Head of caudate nucleus (tissue), 42 donors: ENCODE measurements at regions of chr14 and their contacts with region 1.

Region 1: GRCh38 chr14:101964297-101965144 is at the start of gene DYNC1H1:
- DNase-seq: peak; percentile 87 to 97 (median 94)

Region 2: DNA sequence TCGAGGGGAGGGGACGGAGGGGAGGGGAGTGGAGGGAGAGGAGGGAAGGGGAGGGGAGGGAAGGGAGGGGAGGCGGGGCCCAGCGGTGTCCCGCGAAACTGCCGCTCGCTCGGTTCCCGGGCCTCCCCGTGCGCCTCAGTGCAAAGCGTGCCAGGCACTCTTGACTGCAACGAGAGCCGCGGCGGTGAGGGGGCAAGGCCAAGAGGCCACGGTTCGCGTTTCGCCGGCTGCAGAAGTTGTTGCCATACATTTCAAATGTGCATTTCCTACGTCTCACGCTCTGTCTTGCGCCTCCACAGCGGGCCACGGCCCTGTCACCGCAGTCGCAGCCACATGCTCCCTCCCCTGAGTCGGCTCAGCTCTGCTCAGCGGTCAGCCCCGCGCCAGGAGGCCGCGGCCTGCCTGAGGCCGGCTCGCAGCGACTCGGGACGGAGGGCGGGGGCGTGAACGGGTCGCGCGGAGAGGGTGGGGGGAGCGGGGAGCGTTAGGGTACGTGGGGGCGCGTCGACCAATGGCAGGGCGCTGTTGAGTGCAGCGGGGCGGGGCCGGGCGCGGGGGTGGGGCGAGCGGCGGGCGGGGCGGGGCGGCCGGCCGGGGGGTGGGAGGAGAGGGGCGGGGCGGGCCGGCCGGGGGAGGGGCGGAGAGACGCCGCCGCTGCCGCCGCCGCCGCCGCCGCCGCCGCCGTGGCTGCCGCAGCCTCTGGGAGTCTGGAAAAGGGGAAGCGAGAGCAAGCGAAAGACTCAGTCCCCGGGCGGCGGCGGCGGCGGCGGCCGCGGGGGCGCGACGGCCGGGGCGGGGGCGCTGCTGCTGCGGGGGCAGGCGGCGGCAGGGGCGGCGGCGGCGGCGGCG is 203.3 kb before region 1 on chr14 and contains the start of gene PPP2R5C:
- intact Hi-C with region 1: loop called (anchors 5 kb)
- DNase-seq: peak; percentile 75 to 98 (median 93)

Region 3: GRCh38 chr14:101947906-101948665 is 16.4 kb before region 1 on chr14:
- intact Hi-C with region 1: loop called (anchors 2 kb)
- DNase-seq: peak; percentile 95 to 100 (median 99)

Region 4: GRCh38 chr14:102046343-102047278 is 82.1 kb after region 1 on chr14:
- intact Hi-C with region 1: loop called (anchors 10 kb)
- DNase-seq: peak; percentile 49 to 90 (median 78)

Region 5: GRCh38 chr14:102096214-102097114 is 131.9 kb after region 1 on chr14:
- intact Hi-C with region 1: loop called (anchors 5 kb)
- DNase-seq: peak; percentile 83 to 97 (median 91)

Region 6: GRCh38 chr14:102164241-102164641 is 199.7 kb after region 1 on chr14:
- intact Hi-C with region 1: no loop called
- DNase-seq: no peak

Region 7: DNA sequence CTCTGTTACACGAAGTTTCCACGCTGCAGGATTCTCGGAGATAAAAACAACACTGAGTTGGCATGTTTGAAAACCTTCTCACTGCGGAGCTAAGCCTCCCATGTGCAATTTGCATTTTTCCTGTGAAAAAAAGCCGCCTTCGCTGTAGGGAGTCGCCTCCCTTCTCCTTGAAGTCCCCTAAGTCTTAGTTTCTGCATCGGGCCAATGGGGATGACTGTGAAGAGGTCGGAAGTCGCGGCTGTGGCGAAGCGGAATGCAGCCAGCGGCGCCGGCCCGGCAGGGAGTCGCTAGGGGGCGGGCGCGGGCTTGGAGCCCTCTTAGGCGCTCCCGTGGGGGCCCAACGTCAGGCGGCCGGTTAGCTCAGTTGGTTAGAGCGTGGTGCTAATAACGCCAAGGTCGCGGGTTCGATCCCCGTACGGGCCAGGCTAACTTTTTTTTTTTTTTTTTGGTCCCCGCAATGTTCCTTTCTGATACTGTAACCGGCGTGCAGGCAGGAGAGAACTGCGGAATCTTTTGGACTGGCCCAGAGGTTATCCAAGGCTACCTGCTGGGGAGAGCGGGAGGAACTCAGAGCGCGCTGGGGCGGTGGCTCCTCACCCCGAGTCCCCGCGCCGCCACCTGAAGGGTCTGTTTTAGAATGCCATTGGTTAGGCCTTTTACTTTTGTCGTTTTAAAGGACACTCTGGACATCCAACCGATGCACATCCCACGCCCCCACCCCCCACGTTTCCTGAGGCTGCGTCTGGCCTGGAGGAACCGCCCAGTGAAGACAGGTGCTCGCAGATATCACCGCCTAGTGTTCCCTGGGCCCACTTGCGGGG is 352.4 kb after region 1 on chr14:
- intact Hi-C with region 1: loop called (anchors 10 kb)
- DNase-seq: peak; percentile 91 to 99 (median 96)